Activated CD4-positive, alpha-beta memory T cell treated with anti-CD3 and anti-CD28 coated beads for 36 hours (primary cell): ENCODE measurements at regions of chr6 and their contacts with region 1.

Region 1: DNA sequence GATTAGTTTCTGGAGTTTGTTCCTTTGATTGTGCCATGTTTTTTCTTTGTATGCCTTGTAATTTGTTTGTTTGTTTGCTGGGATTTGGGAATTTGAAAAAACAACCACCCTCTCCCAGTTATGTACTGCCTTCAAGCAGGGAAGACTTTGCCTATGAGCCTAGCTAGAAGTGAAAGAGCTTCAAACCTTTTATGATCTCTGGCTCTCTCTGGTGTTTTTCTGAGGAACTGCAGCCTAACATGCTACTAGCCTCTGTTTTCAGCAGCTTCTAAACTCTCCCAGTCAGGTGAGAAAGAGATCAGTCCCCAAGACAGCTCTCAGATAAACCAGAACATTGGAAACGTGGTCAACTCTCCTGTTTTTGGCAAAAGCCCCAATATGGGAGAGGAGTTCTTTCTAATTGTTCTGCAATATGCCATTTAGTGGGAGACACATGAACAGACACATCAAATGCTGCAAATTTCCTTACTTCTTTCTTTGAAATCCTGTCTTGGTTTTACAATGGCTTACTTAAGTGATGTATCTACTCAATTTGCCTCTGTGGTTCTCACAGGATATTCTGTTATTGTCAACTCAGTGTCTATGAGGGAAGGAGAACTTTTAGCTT is 58.9 kb upstream of the SERINC1 start:
- DNase-seq: peak; percentile 40
- H3K4me3 Mint-ChIP-seq: no peak overlapping the region
- H3K27ac Mint-ChIP-seq: no peak overlapping the region
- H3K4me1 Mint-ChIP-seq: no peaks in the 10 kb centered on the region
- H3K27me3 Mint-ChIP-seq: peaks cover 22% of the 10 kb centered on the region

Region 2: GRCh38 chr6:121055572-121056163 is 1474.9 kb before region 1 on chr6:
- CTCF ChIA-PET with region 1: interaction called, 16 read pairs
- POLR2A ChIA-PET with region 1: no interaction called
- intact Hi-C with region 1: no loop called
- DNase-seq: no peak
- H3K4me3 Mint-ChIP-seq: no peak overlapping the region
- H3K27ac Mint-ChIP-seq: no peak overlapping the region
- H3K4me1 Mint-ChIP-seq: no peaks in the 10 kb centered on the region
- H3K27me3 Mint-ChIP-seq: no peaks in the 10 kb centered on the region

Region 3: DNA sequence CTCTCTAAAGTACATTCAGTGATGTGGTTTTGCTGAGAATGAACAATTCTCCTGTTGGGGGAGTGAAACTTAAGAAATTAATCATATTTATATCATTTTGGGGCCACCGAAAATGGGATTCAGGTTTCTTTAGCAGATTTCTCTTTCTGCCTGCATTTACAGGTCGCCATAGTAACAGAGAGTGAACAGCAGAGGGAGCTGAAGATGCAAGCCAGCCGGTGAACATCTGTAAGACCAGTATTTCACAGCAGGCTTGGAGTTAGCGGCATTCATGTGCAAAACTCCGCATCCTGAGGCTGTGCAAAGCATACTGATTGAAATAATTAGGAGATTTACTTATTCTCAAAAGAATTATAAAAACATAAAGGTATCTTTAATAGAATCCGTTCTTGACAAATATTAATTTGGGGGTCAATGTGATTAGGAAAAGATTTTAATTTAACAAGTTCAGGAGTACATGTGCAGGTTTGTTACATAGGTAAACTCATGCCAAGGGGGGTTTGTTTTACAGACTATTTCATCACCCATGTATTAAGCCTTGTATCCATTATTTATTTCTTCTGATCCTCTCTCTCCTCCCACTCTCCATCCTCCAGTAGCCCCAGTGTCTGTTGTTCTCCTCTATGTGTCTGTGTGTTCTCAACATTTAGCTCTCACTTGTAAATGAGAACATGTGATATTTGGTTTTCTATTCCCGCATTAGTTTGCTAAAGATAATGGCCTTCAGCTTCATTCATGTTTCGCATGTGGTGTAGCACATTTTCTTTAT is 148.9 kb before region 1 on chr6:
- CTCF ChIA-PET with region 1: interaction called, 111 read pairs
- POLR2A ChIA-PET with region 1: no interaction called
- intact Hi-C with region 1: loop called (anchors 1 kb)
- DNase-seq: peak; percentile 65
- H3K4me3 Mint-ChIP-seq: no peak overlapping the region
- H3K27ac Mint-ChIP-seq: no peak overlapping the region
- H3K4me1 Mint-ChIP-seq: peaks cover 4% of the 10 kb centered on the region
- H3K27me3 Mint-ChIP-seq: peaks cover 11% of the 10 kb centered on the region

Region 4: GRCh38 chr6:122482750-122483080 is 47.8 kb before region 1 on chr6:
- CTCF ChIA-PET with region 1: interaction called, 234 read pairs
- POLR2A ChIA-PET with region 1: no interaction called
- intact Hi-C with region 1: no loop called
- DNase-seq: no peak
- H3K4me3 Mint-ChIP-seq: no peak overlapping the region
- H3K27ac Mint-ChIP-seq: no peak overlapping the region
- H3K4me1 Mint-ChIP-seq: no peaks in the 10 kb centered on the region
- H3K27me3 Mint-ChIP-seq: no peaks in the 10 kb centered on the region

Region 5: DNA sequence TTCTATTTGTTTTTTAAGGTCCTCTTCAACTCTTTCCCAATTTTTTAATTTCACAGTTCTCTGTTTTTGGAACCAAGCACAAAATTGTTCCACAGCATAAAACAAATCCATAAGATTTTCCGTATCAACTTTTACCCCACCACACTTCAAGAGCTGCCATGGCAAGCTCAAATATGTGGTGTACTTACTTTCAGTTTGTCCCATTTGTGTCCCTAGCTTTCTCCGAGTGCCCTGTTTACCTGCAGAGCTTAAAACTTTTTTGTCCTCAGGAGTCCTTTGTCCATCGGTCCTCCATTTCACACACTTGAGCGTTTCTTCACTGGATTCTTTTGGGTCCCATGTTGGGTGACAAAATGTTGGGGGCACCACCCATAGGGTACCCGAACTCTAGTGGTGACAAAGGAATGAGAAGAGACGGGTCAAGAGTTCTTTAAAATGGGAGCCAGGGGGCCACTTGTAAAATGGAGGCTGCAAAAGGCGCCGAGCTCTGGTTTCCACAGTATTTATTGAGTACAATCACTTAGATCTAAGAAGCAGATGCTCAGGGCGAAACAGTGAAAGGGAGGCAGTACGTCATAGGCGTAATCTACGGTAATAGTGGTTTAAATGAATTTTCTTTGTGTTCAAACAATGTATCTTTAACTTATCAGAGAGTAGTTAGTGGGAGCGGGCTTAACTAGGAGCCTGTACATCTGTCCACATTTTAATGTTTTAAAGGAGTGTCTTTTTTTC is 19.2 kb before region 1 on chr6:
- CTCF ChIA-PET with region 1: interaction called, 13 read pairs
- POLR2A ChIA-PET with region 1: no interaction called
- intact Hi-C with region 1: no loop called
- DNase-seq: no peak
- H3K4me3 Mint-ChIP-seq: no peak overlapping the region
- H3K27ac Mint-ChIP-seq: no peak overlapping the region
- H3K4me1 Mint-ChIP-seq: no peaks in the 10 kb centered on the region
- H3K27me3 Mint-ChIP-seq: peaks cover under 1% of the 10 kb centered on the region

Region 6: GRCh38 chr6:123263981-123264380 is 733.4 kb after region 1 on chr6:
- CTCF ChIA-PET with region 1: no interaction called
- POLR2A ChIA-PET with region 1: no interaction called
- intact Hi-C with region 1: no loop called
- DNase-seq: no peak
- H3K4me3 Mint-ChIP-seq: no peak overlapping the region
- H3K27ac Mint-ChIP-seq: no peak overlapping the region
- H3K4me1 Mint-ChIP-seq: no peaks in the 10 kb centered on the region
- H3K27me3 Mint-ChIP-seq: no peaks in the 10 kb centered on the region